Esophagus muscularis mucosa (tissue), 4 donors: ENCODE measurements at regions of chr20 and their contacts with region 1.

Region 1: DNA sequence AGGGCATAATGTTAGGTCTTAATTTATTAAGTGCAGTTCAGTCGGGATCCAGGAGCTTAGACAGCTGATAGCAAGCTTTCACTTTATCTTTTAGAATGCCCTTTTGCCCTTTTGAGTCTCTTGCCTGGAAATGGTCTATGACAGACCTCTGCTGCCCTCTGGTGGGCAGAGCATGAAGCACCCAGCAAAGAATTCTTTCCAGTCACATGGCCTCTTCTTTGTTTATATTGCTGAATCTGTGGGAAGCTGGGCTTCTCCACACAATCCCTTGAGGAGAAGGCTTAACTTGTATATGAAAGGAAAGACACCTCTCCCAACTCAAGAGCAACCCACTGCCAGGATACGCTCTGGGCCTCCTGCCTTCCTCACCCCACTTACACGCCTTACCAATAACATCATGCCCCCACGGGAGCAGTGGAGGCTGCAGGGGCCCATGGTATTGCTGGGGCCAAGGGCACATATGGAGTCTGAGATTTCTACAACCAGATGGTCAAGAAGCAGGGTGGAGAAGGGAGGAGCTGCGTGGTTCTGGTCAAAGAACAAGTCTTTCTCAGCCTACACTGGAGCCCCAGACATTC is 20.4 kb downstream of the WFDC3 start:
- DNase-seq: no peak
- H3K4me3 ChIP-seq: no peak overlapping the region
- H3K27ac ChIP-seq: peak overlapping the region; percentile 64 to 74 (median 68)
- H3K4me1 ChIP-seq: peaks cover 9 to 21% (median 13%) of the 10 kb centered on the region in 4 donors
- H3K27me3 ChIP-seq: no peaks in the 10 kb centered on the region
- CTCF ChIP-seq: peak; percentile 98 to 99 (median 98)
- EP300 ChIP-seq: no peak
- POLR2A ChIP-seq: no peak

Region 2: GRCh38 chr20:45320948-45321595 is 450.2 kb before region 1 on chr20:
- intact Hi-C with region 1: loop called (anchors 2 kb)
- DNase-seq: no peak
- H3K4me3 ChIP-seq: no peak overlapping the region
- H3K27ac ChIP-seq: no peak overlapping the region
- H3K4me1 ChIP-seq: peaks cover 0 to 13% (median 3%) of the 10 kb centered on the region in 4 donors
- H3K27me3 ChIP-seq: peaks cover 0 to 19% (median 7%) of the 10 kb centered on the region in 4 donors
- CTCF ChIP-seq: no peak
- EP300 ChIP-seq: no peak
- POLR2A ChIP-seq: no peak

Region 3: DNA sequence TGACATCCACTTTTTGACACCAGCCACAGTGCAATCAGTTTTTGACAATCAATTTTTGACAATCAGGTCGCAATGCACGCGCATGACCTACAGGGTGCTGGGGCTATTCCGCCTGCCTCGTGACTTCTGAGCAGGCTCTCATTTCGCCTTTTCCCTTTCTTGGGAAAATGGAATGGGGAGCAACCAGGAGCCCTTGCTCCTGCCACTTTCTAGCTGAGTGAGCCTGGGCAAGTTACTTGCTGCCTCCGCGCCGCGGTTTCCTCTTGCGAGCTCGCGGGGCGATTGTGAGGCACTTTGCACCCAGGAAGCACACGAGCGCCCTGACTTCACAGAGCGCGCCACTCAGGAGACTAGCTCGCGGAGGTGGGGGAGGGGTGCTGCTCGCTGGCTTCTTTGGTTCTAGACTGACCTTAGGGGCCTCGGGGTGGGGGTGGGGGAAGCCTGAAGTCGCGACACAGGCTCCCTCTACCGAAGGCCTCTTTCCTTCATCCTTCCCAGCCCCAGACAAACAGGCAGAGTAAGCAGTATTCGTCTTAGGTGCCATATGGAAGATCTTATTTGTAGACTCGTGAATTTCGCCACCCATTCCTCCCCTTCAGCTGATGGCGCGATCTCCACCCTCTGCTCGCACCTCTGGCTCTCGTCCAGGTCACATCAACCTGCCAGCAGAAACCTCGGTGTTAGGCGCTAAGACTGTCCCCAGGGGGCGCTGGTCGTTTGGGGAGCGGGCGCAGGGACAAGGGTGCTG is 397.7 kb before region 1 on chr20:
- intact Hi-C with region 1: loop called (anchors 5 kb)
- DNase-seq: peak; percentile 97
- H3K4me3 ChIP-seq: peak overlapping the region; percentile 52 to 65 (median 62)
- H3K27ac ChIP-seq: peak overlapping the region; percentile 80 to 87 (median 82)
- H3K4me1 ChIP-seq: peaks cover 17 to 25% (median 23%) of the 10 kb centered on the region in 4 donors
- H3K27me3 ChIP-seq: no peaks in the 10 kb centered on the region
- CTCF ChIP-seq: peak; percentile 91 to 94 (median 91)
- EP300 ChIP-seq: no peak
- POLR2A ChIP-seq: no peak

Region 4: GRCh38 chr20:45436732-45437391 is 334.4 kb before region 1 on chr20:
- intact Hi-C with region 1: loop called (anchors 10 kb)
- DNase-seq: peak; percentile 95
- H3K4me3 ChIP-seq: peak overlapping the region; percentile 59 to 77 (median 60)
- H3K27ac ChIP-seq: peak overlapping the region; percentile 80 to 84 (median 82)
- H3K4me1 ChIP-seq: peaks cover 5 to 14% (median 12%) of the 10 kb centered on the region in 4 donors
- H3K27me3 ChIP-seq: no peaks in the 10 kb centered on the region
- CTCF ChIP-seq: peak; percentile 94 to 98 (median 96)
- EP300 ChIP-seq: no peak
- POLR2A ChIP-seq: no peak

Region 5: GRCh38 chr20:45545754-45546453 is 225.4 kb before region 1 on chr20:
- intact Hi-C with region 1: loop called (anchors 5 kb)
- DNase-seq: peak; percentile 55
- H3K4me3 ChIP-seq: no peak overlapping the region
- H3K27ac ChIP-seq: no peak overlapping the region
- H3K4me1 ChIP-seq: no peaks in the 10 kb centered on the region
- H3K27me3 ChIP-seq: peaks cover 0 to 12% (median 0%) of the 10 kb centered on the region in 4 donors
- CTCF ChIP-seq: peak in 2 of 3 experiments; percentile 33 to 42
- EP300 ChIP-seq: no peak
- POLR2A ChIP-seq: no peak